Activated CD4-positive, alpha-beta T cell treated with anti-CD3 and anti-CD28 coated beads for 36 hours (primary cell): ENCODE measurements at regions of chr2 and their contacts with region 1.

Region 1: GRCh38 chr2:24046930-24047702 is at the start of gene WDCP:
- DNase-seq: peak; percentile 97
- ATAC-seq: peak; percentile 100
- H3K4me3 Mint-ChIP-seq: peak within 1 kb of the TSS; percentile 88
- H3K27ac Mint-ChIP-seq: peak within 1 kb of the TSS; percentile 91
- H3K4me1 Mint-ChIP-seq: peaks cover 25% of the 10 kb centered on the region
- H3K27me3 Mint-ChIP-seq: peaks cover 5% of the 10 kb centered on the region
- total RNA-seq, gene WDCP: 13.2 to 21.5 TPM

Region 2: GRCh38 chr2:23916727-23917405 is 130.2 kb before region 1 on chr2:
- CTCF ChIA-PET with region 1: no interaction called
- POLR2A ChIA-PET with region 1: no interaction called
- intact Hi-C with region 1: no loop called
- DNase-seq: no peak
- ATAC-seq: peak; percentile 74
- H3K4me3 Mint-ChIP-seq: no peak overlapping the region
- H3K27ac Mint-ChIP-seq: peak overlapping the region; percentile 66
- H3K4me1 Mint-ChIP-seq: peaks cover 46% of the 10 kb centered on the region
- H3K27me3 Mint-ChIP-seq: no peaks in the 10 kb centered on the region

Region 3: DNA sequence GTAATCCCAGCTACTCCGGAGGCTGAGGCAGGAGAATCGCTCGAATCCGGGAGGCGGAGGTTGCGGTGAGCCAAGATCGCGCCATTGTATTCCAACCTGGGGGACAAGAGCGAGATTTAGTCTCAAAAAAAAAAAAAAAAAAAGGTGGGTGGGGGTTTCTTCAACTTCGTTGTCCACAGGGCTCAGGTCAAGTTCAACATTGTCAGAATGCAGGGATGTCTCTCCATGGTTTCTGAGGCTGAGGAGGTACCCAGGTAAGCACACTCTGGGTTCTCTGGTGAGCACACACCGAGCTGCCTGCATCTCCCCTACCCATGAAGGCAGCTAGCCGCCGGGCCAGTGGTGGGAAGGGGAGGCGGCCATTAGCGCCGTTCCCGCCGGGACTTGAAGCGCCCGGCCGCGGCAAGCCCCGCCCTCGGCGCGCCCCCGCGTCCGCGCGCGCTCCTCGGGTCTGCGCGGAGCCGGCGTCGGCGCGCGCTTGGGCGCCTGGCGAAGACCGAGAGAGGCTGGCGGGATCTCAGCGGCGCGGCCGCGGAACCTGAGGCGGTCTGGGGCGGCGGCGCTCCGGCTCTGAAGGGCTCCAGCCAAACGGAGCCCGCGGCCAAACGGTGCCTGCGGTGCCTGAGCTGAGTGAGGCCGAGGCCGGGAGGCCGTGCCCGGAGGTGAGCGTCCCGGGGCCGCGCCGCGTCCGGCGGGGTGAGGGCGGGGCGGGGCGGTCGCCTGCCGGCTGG is 107.0 kb before region 1 on chr2 and contains the start of gene UBXN2A:
- CTCF ChIA-PET with region 1: no interaction called
- POLR2A ChIA-PET with region 1: no interaction called
- intact Hi-C with region 1: loop called (anchors 1 to 5 kb)
- DNase-seq: peak; percentile 85
- ATAC-seq: peak; percentile 88
- H3K4me3 Mint-ChIP-seq: peak within 1 kb of the TSS; percentile 84
- H3K27ac Mint-ChIP-seq: peak within 1 kb of the TSS; percentile 93
- H3K4me1 Mint-ChIP-seq: peaks cover 18% of the 10 kb centered on the region
- H3K27me3 Mint-ChIP-seq: peaks cover 5% of the 10 kb centered on the region
- total RNA-seq, gene UBXN2A: 9.1 to 10.5 TPM

Region 4: DNA sequence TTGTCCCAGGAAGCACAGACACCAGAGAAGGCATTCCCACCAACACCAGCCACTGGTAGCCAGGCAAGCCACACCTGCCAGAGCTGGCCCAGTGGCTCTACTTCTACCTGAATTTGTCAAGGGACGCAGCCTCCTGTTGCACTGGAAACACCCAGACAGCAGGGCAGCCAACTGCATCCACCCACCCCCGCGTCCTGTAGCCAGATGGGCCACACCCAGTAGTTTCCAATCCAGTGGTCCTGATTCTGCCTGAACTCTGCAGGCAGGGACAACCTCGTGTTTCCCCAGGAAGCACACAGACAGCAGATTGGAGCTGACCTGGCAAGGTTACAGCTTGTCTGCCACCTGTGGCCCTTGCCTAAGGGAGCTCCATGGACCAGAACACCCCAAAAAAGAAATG is 57.8 kb after region 1 on chr2:
- CTCF ChIA-PET with region 1: no interaction called
- POLR2A ChIA-PET with region 1: no interaction called
- intact Hi-C with region 1: no loop called
- DNase-seq: no peak
- ATAC-seq: no peak
- H3K4me3 Mint-ChIP-seq: no peak overlapping the region
- H3K27ac Mint-ChIP-seq: no peak overlapping the region
- H3K4me1 Mint-ChIP-seq: no peaks in the 10 kb centered on the region
- H3K27me3 Mint-ChIP-seq: no peaks in the 10 kb centered on the region

Region 5: GRCh38 chr2:24360050-24360962 is 313.2 kb after region 1 on chr2 and contains the start of gene ITSN2:
- CTCF ChIA-PET with region 1: no interaction called
- POLR2A ChIA-PET with region 1: interaction called, 4 read pairs
- intact Hi-C with region 1: loop called in 1 of 2 experiments (anchors 1 kb)
- DNase-seq: peak; percentile 90
- ATAC-seq: peak; percentile 89
- H3K4me3 Mint-ChIP-seq: peak within 1 kb of the TSS; percentile 84
- H3K27ac Mint-ChIP-seq: peak within 1 kb of the TSS; percentile 94
- H3K4me1 Mint-ChIP-seq: peaks cover 29% of the 10 kb centered on the region
- H3K27me3 Mint-ChIP-seq: no peaks in the 10 kb centered on the region
- total RNA-seq, gene ITSN2: 46.0 to 49.6 TPM